ENCODE measurements at regions of chr9 and their contacts with region 1.

Region 1: DNA sequence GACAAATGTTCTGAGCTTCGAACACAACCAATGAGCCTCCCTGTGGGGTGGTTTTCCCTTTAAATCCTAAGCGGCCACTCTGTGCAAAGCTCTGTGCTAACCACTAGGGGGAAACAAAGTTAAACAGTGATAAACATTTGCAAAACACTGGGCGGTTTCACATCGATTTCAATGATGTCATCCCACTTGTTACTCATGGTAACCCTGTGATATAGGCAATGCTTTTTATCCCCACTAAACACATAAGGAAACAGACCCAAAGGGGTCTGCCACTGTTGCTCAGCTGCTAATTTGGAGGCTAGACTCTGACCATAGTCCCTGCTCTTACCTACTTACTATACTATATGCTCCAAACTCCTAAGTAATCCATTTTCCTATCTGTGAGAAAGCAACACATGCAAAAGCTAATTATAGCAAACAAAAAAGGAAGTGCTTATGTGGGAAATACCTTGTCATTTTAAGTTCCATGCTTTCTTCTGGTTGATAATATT is 57.3 kb downstream of the PTPN3 start:
- DNase-seq: peak; percentile 39
- H3K4me3 ChIP-seq: no peak overlapping the region
- H3K27ac ChIP-seq: peak overlapping the region in 1 of 4 donors; percentile 17
- H3K4me1 ChIP-seq: peaks cover 0 to 4% (median 1%) of the 10 kb centered on the region in 4 donors
- H3K27me3 ChIP-seq: no peaks in the 10 kb centered on the region
- CTCF ChIP-seq: peak; percentile 66 to 75 (median 73)
- EP300 ChIP-seq: no peak
- POLR2A ChIP-seq: no peak

Region 2: DNA sequence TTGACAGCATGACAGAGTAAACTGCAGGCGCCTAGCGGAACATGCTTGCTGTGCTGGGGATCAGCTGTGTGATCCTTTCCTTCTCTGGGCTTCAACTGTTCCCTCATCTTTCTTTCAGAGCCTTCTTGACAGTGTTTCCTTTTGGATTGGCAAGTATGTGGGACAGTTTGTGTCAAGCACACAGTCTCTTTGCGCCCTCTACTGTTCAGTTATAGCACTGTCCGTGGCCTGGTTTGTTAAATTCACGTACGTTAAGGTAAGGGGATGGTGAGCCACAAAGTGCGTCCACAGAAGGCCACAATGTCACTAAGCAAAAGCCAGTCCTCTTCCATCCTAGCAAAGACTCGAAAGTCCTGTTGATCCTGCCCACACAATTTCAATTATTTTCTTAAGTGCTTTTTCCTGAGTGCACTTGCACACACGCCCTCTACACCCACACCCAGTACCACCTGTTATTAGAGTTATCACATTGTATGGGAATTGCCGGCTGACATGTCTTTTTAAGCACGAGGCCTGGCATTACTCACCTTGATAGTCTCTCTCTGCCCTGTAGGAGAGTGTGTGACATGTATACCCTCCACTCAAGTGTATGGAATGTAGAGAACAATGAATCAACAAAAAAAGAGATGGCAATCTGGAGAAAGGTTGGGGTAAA is 79.8 kb after region 1 on chr9:
- in situ Hi-C with region 1: loop called in 1 of 4 experiments (anchors 10 kb)
- intact Hi-C with region 1: loop called (anchors 2 kb)
- DNase-seq: peak; percentile 71
- H3K4me3 ChIP-seq: no peak overlapping the region
- H3K27ac ChIP-seq: no peak overlapping the region
- H3K4me1 ChIP-seq: peaks cover 0 to 3% (median 0%) of the 10 kb centered on the region in 4 donors
- H3K27me3 ChIP-seq: no peaks in the 10 kb centered on the region
- CTCF ChIP-seq: peak; percentile 73 to 89 (median 80)
- EP300 ChIP-seq: no peak
- POLR2A ChIP-seq: no peak